Mucosa of descending colon (tissue), 3 donors: ENCODE measurements at regions of chr5 and their contacts with region 1.

Region 1: GRCh38 chr5:162817364-162817763 is 620.0 kb upstream of the CCNG1 start:
- DNase-seq: no peak
- ATAC-seq: no peak
- H3K4me3 ChIP-seq: no peak overlapping the region
- H3K4me1 ChIP-seq: no peaks in the 10 kb centered on the region
- CTCF ChIP-seq: no peak

Region 2: DNA sequence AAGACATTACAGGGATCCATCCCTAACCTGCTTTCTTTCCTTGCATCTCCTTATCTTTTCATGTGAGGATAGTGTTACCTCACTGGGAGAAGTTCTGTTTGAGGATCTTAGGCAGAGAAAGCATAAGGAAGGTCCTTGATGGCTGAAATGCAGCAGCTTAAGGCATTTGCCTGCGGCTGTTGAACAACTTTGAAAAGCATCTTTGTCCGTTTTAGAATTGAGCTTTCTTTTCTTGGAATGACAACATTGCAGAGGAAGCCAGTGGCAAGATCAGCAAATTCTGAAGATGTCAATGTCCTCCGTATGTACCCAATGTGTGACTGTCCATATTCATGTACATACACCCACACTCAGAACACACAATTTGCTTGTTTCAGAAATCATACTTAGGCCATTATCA is 313.6 kb before region 1 on chr5:
- intact Hi-C with region 1: no loop called
- DNase-seq: no peak
- ATAC-seq: no peak
- H3K4me3 ChIP-seq: no peak overlapping the region
- H3K4me1 ChIP-seq: no peaks in the 10 kb centered on the region
- CTCF ChIP-seq: no peak

Region 3: GRCh38 chr5:162852134-162852533 is 34.8 kb after region 1 on chr5:
- intact Hi-C with region 1: loop called in 1 of 2 experiments (anchors 2 kb)
- DNase-seq: no peak
- ATAC-seq: no peak
- H3K4me3 ChIP-seq: no peak overlapping the region
- H3K4me1 ChIP-seq: no peaks in the 10 kb centered on the region
- CTCF ChIP-seq: no peak